ENCODE measurements at regions of chr5 and their contacts with region 1.

Region 1: DNA sequence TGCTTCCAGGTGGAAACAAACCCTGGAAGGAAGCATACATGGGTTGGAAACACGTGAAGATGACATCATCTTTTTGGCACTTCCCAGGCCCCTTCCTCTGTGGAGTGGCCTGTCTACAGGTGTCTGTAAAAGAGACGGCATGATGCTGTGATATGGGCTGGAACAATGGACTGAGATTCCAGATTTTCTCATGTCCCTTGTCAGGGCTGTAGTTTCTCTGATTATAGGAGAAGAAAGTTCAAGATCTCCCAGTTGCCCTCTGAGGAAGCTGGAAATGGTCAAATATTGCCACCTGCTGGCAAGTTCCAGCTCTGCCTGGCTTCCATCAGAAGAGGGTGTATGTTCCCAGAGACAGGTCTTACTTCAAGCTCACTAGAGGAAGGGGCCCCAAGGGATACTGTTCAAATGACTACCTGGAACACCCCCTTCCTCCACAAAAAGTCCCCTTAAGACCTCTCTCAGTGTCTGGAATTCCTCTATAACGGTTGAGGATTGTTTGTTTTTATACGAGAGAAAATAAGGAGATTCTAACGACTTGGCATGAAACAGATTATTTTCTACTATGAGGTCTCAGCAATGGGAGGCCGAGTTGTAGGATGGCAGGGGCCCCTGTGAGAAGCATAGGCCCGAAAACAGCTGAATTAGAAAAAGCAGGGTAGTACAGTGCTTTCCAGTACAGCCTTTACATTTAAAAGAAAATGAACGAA is 7.3 kb upstream of the ANXA6 start:
- DNase-seq: peak; percentile 71 to 92
- ATAC-seq: peak; percentile 89 to 99 (median 99)
- H3K4me3 ChIP-seq: no peak overlapping the region
- H3K4me3 Mint-ChIP-seq: no peak overlapping the region
- H3K27ac ChIP-seq: no peak overlapping the region
- H3K27ac Mint-ChIP-seq: no peak overlapping the region
- H3K4me1 ChIP-seq: peaks cover 4% of the 10 kb centered on the region
- H3K4me1 Mint-ChIP-seq: peaks cover 15 to 17% of the 10 kb centered on the region in 2 donors
- H3K27me3 ChIP-seq: no peaks in the 10 kb centered on the region
- H3K27me3 Mint-ChIP-seq: no peaks in the 10 kb centered on the region
- CTCF ChIP-seq: peak; percentile 87

Region 2: GRCh38 chr5:151051066-151051930 is 113.5 kb before region 1 on chr5:
- intact Hi-C with region 1: loop called (anchors 1 kb)
- DNase-seq: peak; percentile 67 to 86
- ATAC-seq: peak; percentile 83 to 87 (median 84)
- H3K4me3 ChIP-seq: no peak overlapping the region
- H3K4me3 Mint-ChIP-seq: no peak overlapping the region
- H3K27ac ChIP-seq: no peak overlapping the region
- H3K27ac Mint-ChIP-seq: peak overlapping the region; percentile 21 to 70
- H3K4me1 ChIP-seq: peaks cover 8% of the 10 kb centered on the region
- H3K4me1 Mint-ChIP-seq: peaks cover 14 to 18% of the 10 kb centered on the region in 2 donors
- H3K27me3 ChIP-seq: no peaks in the 10 kb centered on the region
- H3K27me3 Mint-ChIP-seq: no peaks in the 10 kb centered on the region
- CTCF ChIP-seq: peak; percentile 84

Region 3: GRCh38 chr5:151126199-151126645 is 38.6 kb before region 1 on chr5:
- intact Hi-C with region 1: loop called (anchors 1 kb)
- DNase-seq: peak; percentile 69 to 83
- ATAC-seq: peak; percentile 72 to 76 (median 76)
- H3K4me3 ChIP-seq: no peak overlapping the region
- H3K4me3 Mint-ChIP-seq: no peak overlapping the region
- H3K27ac ChIP-seq: peak overlapping the region; percentile 54
- H3K27ac Mint-ChIP-seq: peak overlapping the region; percentile 50 to 82
- H3K4me1 ChIP-seq: peaks cover 30% of the 10 kb centered on the region
- H3K4me1 Mint-ChIP-seq: peaks cover 34 to 43% of the 10 kb centered on the region in 2 donors
- H3K27me3 ChIP-seq: no peaks in the 10 kb centered on the region
- H3K27me3 Mint-ChIP-seq: no peaks in the 10 kb centered on the region
- CTCF ChIP-seq: peak; percentile 84

Region 4: GRCh38 chr5:151196556-151197290 is 31.9 kb after region 1 on chr5:
- intact Hi-C with region 1: no loop called
- DNase-seq: peak in 1 of 2 donors; percentile 32
- ATAC-seq: peak in 2 of 3 donors; percentile 31 to 48
- H3K4me3 ChIP-seq: no peak overlapping the region
- H3K4me3 Mint-ChIP-seq: no peak overlapping the region
- H3K27ac ChIP-seq: no peak overlapping the region
- H3K27ac Mint-ChIP-seq: peak overlapping the region; percentile 81 to 91
- H3K4me1 ChIP-seq: peaks cover 20% of the 10 kb centered on the region
- H3K4me1 Mint-ChIP-seq: peaks cover 53 to 61% of the 10 kb centered on the region in 2 donors
- H3K27me3 ChIP-seq: no peaks in the 10 kb centered on the region
- H3K27me3 Mint-ChIP-seq: no peaks in the 10 kb centered on the region
- CTCF ChIP-seq: no peak

Region 5: GRCh38 chr5:151270599-151270998 is 105.8 kb after region 1 on chr5:
- intact Hi-C with region 1: no loop called
- DNase-seq: no peak
- ATAC-seq: peak in 1 of 3 donors; percentile 24
- H3K4me3 ChIP-seq: no peak overlapping the region
- H3K4me3 Mint-ChIP-seq: no peak overlapping the region
- H3K27ac ChIP-seq: no peak overlapping the region
- H3K27ac Mint-ChIP-seq: no peak overlapping the region
- H3K4me1 ChIP-seq: no peaks in the 10 kb centered on the region
- H3K4me1 Mint-ChIP-seq: no peaks in the 10 kb centered on the region
- H3K27me3 ChIP-seq: no peaks in the 10 kb centered on the region
- H3K27me3 Mint-ChIP-seq: no peaks in the 10 kb centered on the region
- CTCF ChIP-seq: no peak